CD4-positive, alpha-beta memory T cell (primary cell): ENCODE measurements at regions of chr7 and their contacts with region 1.

Region 1: DNA sequence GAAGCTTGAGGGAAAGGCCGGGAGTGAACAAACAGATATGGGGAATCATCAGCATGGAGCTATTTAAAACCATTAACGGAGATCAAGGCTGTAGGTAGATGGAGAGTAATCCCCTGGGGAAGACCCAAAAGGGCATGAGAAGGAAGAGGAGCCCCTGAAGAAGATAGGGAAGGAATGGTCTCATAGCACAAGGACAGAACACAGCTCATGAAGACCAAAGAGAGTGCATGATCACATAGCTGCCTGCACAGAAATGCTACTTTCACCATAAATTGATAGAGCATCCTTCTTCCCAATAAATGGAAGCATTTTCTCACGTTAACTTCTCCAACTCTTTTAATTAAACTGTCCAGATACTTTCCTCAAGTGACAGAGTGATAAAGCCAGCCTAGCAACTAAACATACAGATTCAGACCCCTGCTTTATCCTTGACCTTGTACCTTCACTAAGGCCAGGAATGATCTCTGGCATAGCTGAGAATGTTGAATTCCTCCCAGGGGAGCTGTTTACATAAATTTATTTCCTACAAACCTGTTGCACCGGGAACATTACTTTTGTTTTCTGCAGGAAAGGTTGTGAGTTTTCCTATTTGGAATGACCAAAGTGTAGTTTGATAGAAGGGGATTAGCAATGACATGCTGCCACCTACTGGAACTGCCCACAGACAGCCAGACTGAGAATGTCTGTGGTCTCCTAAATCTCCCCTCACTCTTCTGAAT is 110.8 kb upstream of the LRGUK start:
- DNase-seq: no peak
- H3K4me3 ChIP-seq: no peak overlapping the region
- H3K4me3 Mint-ChIP-seq: no peak overlapping the region
- H3K27ac ChIP-seq: no peak overlapping the region
- H3K27ac Mint-ChIP-seq: no peak overlapping the region
- H3K4me1 ChIP-seq: no peaks in the 10 kb centered on the region
- H3K4me1 Mint-ChIP-seq: peaks cover 0 to 2% (median 0%) of the 10 kb centered on the region in 4 donors
- H3K27me3 ChIP-seq: no peaks in the 10 kb centered on the region
- H3K27me3 Mint-ChIP-seq: no peaks in the 10 kb centered on the region

Region 2: GRCh38 chr7:132318352-132319318 is 1697.7 kb before region 1 on chr7:
- CTCF ChIA-PET with region 1: no interaction called
- POLR2A ChIA-PET with region 1: no interaction called
- intact Hi-C with region 1: loop called (anchors 2 kb)
- DNase-seq: peak; percentile 70 to 74 (median 72)
- H3K4me3 ChIP-seq: no peak overlapping the region
- H3K4me3 Mint-ChIP-seq: peak overlapping the region in 6 of 8 donors; percentile 4 to 51 (median 22)
- H3K27ac ChIP-seq: no peak overlapping the region
- H3K27ac Mint-ChIP-seq: no peak overlapping the region
- H3K4me1 ChIP-seq: peaks cover 10% of the 10 kb centered on the region
- H3K4me1 Mint-ChIP-seq: peaks cover 6 to 13% (median 9%) of the 10 kb centered on the region in 4 donors
- H3K27me3 ChIP-seq: no peaks in the 10 kb centered on the region
- H3K27me3 Mint-ChIP-seq: peaks cover 25 to 30% of the 10 kb centered on the region in 2 donors

Region 3: GRCh38 chr7:133344275-133344674 is 672.1 kb before region 1 on chr7:
- CTCF ChIA-PET with region 1: no interaction called
- POLR2A ChIA-PET with region 1: no interaction called
- intact Hi-C with region 1: no loop called
- DNase-seq: no peak
- H3K4me3 ChIP-seq: no peak overlapping the region
- H3K4me3 Mint-ChIP-seq: no peak overlapping the region
- H3K27ac ChIP-seq: no peak overlapping the region
- H3K27ac Mint-ChIP-seq: no peak overlapping the region
- H3K4me1 ChIP-seq: no peaks in the 10 kb centered on the region
- H3K4me1 Mint-ChIP-seq: peaks cover 6 to 25% (median 10%) of the 10 kb centered on the region in 4 donors
- H3K27me3 ChIP-seq: no peaks in the 10 kb centered on the region
- H3K27me3 Mint-ChIP-seq: no peaks in the 10 kb centered on the region